ENCODE measurements at regions of chr19 and their contacts with region 1.

Region 1: GRCh38 chr19:53103198-53103944 is at the start of gene ZNF160:
- DNase-seq: peak; percentile 92 to 99
- H3K4me3 ChIP-seq: peak within 1 kb of the TSS; percentile 69 to 76
- H3K27ac ChIP-seq: peak within 1 kb of the TSS; percentile 87 to 89
- H3K4me1 ChIP-seq: peaks cover 3 to 13% of the 10 kb centered on the region in 2 donors
- H3K27me3 ChIP-seq: no peaks in the 10 kb centered on the region
- CTCF ChIP-seq: no peak
- total RNA-seq, gene ZNF160: 124 TPM

Region 2: DNA sequence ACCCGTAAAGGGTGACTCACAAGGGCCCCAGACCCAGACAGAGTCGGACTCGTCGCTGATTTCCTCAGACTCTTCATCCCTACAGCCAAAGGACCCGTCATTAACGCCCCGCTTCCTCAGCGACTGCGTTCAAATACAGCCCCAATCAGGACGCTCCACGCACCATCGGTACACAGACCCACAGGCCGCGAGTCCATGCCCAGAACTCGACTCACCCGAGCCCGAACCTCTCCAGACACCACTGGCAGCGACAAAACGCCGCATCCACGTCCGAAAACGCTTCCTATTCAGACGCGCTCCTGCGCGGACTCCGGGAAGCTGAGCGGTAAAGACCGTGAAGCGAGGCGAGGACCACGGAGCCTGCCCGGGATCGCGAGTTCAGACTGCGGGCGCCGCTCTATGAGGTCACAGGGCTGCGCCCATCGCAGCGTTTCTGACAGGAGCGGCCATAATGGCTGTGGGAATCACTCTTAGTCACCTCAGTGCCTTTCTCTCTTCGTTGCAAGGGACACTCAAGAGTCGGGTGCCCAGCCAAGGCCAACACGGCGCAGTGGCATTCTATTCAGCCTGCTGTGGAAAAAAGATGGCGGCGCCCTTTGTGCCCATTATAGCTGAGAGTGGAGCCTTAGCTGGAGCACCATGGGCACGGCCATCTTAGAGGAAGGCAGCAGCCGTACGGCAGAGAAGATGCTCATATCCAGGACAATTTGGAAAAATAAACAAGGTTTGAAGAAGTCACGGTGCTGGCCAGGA is 1075.2 kb before region 1 on chr19 and contains the start of gene ZNF614:
- intact Hi-C with region 1: loop called (anchors 10 kb)
- DNase-seq: peak; percentile 71 to 94
- H3K4me3 ChIP-seq: peak within 1 kb of the TSS; percentile 81 to 96
- H3K27ac ChIP-seq: peak within 1 kb of the TSS; percentile 94 to 98
- H3K4me1 ChIP-seq: peaks cover 0 to 5% of the 10 kb centered on the region in 2 donors
- H3K27me3 ChIP-seq: no peaks in the 10 kb centered on the region
- CTCF ChIP-seq: no peak
- total RNA-seq, gene ZNF614: 1.7 TPM

Region 3: DNA sequence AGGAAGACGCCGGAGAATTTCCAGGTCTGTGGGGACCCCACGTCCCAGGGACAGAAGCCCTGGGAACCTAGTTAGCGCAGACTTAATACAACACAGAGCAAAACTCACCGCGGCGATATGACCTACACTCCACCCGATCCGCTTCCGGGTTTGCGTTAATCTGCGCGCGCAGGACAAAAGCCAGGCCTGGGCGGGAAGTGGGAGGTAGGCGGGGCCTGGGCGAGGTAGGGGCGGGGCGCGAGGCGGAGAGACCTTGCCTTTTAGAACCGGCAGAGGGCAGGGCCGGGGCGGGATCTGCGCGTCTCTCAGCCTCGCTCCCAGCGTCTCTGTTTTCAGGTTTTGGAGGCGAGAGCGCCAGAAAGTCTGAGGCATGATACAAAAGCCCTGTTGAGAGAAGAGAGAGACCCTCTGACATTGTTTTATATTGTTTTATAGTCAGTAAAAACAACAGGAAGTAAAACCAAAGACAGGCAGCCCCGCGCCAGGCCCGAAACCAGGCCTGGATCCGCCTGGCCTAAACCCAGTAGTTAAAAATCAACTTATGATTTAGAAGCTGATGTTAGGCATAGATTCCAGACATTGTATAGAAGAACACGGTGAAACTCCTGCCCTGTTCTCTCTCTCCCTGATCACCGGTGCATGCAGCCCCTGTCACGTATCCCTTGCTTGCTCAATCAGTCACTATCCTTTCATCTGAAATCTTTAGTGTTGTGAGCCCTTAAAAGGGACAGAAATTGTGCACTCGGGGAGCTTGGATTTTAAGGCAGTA is 368.3 kb before region 1 on chr19 and contains the start of gene ZNF611:
- intact Hi-C with region 1: loop called (anchors 2 kb)
- DNase-seq: peak; percentile 86 to 99
- H3K4me3 ChIP-seq: peak within 1 kb of the TSS; percentile 81 to 82
- H3K27ac ChIP-seq: peak within 1 kb of the TSS; percentile 78 to 88
- H3K4me1 ChIP-seq: peaks cover 0 to 5% of the 10 kb centered on the region in 2 donors
- H3K27me3 ChIP-seq: no peaks in the 10 kb centered on the region
- CTCF ChIP-seq: peak; percentile 68 to 79 (median 74)
- total RNA-seq, gene ZNF611: 13.1 TPM

Region 4: GRCh38 chr19:52922841-52923777 is 180.3 kb before region 1 on chr19 and contains the start of gene ZNF888:
- intact Hi-C with region 1: loop called (anchors 1 kb)
- DNase-seq: peak; percentile 70 to 96
- H3K4me3 ChIP-seq: peak within 1 kb of the TSS; percentile 79 to 83
- H3K27ac ChIP-seq: peak within 1 kb of the TSS; percentile 88 to 91
- H3K4me1 ChIP-seq: peaks cover 0 to 8% of the 10 kb centered on the region in 2 donors
- H3K27me3 ChIP-seq: no peaks in the 10 kb centered on the region
- CTCF ChIP-seq: no peak
- total RNA-seq, gene ZNF888: 0.43 TPM

Region 5: GRCh38 chr19:52948025-52948770 is 155.2 kb before region 1 on chr19:
- intact Hi-C with region 1: no loop called
- DNase-seq: no peak
- H3K4me3 ChIP-seq: no peak overlapping the region
- H3K27ac ChIP-seq: no peak overlapping the region
- H3K4me1 ChIP-seq: peaks cover 0 to 2% of the 10 kb centered on the region in 2 donors
- H3K27me3 ChIP-seq: no peaks in the 10 kb centered on the region
- CTCF ChIP-seq: no peak

Region 6: DNA sequence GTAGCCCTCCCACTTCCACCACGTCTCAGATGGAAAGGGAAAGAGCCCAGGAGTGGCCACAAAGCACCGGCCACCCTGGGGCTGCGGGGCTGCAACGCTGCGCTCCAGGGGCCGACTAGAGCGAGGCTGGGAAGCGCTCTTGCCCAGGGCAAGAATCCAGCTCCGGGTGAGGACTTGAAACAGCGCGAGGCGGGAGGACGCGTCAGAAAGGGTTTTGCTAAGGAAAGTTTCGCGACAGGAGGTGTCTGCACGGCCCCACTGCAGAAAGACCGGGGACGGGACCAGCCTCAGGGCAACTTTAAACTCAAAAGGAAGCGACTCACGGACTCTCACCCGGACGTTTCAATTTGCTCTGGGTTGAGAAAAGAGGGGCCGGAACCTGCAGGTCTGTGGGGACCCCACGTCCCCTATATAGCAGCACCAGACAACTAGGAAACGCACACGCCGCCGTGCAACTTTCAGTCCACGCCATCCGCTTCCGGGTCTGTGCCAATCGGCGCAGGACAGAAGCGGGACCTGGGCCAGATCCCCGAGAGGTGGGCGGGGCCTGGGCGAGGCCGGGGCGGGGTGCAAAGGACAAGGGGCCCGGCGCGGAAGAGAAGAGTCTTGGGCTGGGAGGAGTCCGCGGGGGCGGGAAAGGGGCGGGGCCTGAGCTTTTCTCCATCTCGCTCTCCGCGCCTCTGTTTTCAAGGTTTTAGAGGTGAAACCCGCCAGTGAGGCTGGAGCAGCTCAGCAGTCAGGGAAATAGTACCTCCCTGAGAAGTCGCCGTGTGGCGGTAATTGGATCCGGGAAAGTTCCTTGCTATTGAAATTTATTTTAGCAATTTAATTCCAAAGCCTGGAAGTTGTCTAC is 140.8 kb before region 1 on chr19 and contains the start of gene ZNF816:
- intact Hi-C with region 1: loop called (anchors 1 kb)
- DNase-seq: peak; percentile 92 to 99
- H3K4me3 ChIP-seq: peak within 1 kb of the TSS; percentile 71 to 74
- H3K27ac ChIP-seq: peak within 1 kb of the TSS; percentile 81 to 87
- H3K4me1 ChIP-seq: peaks cover 0 to 9% of the 10 kb centered on the region in 2 donors
- H3K27me3 ChIP-seq: no peaks in the 10 kb centered on the region
- CTCF ChIP-seq: no peak
- total RNA-seq, gene ZNF816: 7.1 TPM

Region 7: DNA sequence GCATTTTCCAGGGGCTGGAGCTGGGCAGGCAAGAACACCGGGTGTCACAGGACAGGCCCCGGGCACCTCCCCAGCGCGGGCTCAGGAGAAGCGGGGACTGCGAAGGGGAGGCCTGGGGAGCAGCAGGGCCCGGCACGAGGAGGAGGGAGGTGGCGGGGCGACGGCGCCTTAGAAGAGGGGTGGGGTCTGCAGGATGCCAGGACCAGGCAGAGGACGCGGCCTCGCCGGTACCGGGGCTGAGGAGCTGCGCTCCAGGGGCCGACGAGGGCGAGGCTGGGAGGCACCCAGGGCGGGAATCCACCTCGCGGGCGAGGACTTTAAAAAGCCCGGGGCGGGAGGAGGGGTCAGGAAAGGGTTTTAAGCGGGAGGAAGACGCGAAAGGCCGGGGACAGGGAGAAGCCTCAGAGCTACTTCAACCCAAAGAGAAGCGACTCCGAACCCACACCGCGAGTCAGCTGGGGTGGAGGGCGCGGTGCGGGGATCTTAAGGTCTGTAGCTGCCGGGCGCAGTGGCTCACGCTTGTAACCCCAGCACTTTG is 54.8 kb after region 1 on chr19:
- intact Hi-C with region 1: loop called (anchors 1 kb)
- DNase-seq: peak in 1 of 2 donors; percentile 65
- H3K4me3 ChIP-seq: peak overlapping the region; percentile 78 to 86
- H3K27ac ChIP-seq: peak overlapping the region; percentile 78 to 82
- H3K4me1 ChIP-seq: no peaks in the 10 kb centered on the region
- H3K27me3 ChIP-seq: no peaks in the 10 kb centered on the region
- CTCF ChIP-seq: no peak

Region 8: GRCh38 chr19:53520550-53521372 is 417.4 kb after region 1 on chr19:
- intact Hi-C with region 1: loop called (anchors 2 kb)
- DNase-seq: peak; percentile 90 to 98
- H3K4me3 ChIP-seq: peak overlapping the region; percentile 51 to 66
- H3K27ac ChIP-seq: peak overlapping the region; percentile 62 to 75
- H3K4me1 ChIP-seq: peaks cover 0 to 5% of the 10 kb centered on the region in 2 donors
- H3K27me3 ChIP-seq: no peaks in the 10 kb centered on the region
- CTCF ChIP-seq: no peak